ENCODE measurements at regions of chr15 and their contacts with region 1.

Region 1: DNA sequence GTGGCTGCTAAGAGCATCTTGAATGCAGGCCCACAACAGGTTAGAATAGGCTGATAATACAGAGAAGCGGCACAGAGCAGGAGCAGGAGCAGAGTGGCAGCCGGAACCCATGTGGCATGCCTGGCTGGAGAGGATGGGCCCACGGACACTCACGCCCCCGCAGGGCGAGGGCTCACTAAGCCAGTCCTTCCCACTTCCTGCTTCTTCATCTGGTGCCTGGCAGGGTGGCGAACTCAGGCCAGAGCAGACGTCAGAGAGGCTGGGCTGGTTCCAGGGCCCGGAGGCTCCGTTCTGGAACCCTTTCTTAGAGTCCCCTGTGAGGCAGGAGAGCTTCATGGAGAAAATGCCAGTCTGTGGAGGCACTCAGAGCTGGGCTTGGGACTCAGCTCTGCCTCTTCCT is 195.1 kb downstream of the NTRK3 start:
- DNase-seq: no peak
- H3K4me3 ChIP-seq: no peak overlapping the region
- H3K27ac ChIP-seq: no peak overlapping the region
- H3K4me1 ChIP-seq: peaks cover 0 to 2% (median under 1%) of the 10 kb centered on the region in 4 experiments; a peak in 2 of 7 replicates
- H3K27me3 ChIP-seq: no peaks in the 10 kb centered on the region
- CTCF ChIP-seq: no peak
- EP300 ChIP-seq: no peak
- POLR2A ChIP-seq: no peak
- RAD21 ChIP-seq: no peak

Region 2: GRCh38 chr15:88073391-88073691 is 11.9 kb after region 1 on chr15:
- CTCF ChIA-PET with region 1: interaction called, 10 read pairs
- POLR2A ChIA-PET with region 1: no interaction called
- DNase-seq: peak in 1 of 2 experiments; percentile 3
- H3K4me3 ChIP-seq: no peak overlapping the region
- H3K27ac ChIP-seq: no peak overlapping the region
- H3K4me1 ChIP-seq: peaks cover 0 to 9% (median 4%) of the 10 kb centered on the region in 4 experiments; a peak in 4 of 7 replicates
- H3K27me3 ChIP-seq: no peaks in the 10 kb centered on the region
- CTCF ChIP-seq: no peak
- EP300 ChIP-seq: no peak
- POLR2A ChIP-seq: no peak
- RAD21 ChIP-seq: no peak

Region 3: DNA sequence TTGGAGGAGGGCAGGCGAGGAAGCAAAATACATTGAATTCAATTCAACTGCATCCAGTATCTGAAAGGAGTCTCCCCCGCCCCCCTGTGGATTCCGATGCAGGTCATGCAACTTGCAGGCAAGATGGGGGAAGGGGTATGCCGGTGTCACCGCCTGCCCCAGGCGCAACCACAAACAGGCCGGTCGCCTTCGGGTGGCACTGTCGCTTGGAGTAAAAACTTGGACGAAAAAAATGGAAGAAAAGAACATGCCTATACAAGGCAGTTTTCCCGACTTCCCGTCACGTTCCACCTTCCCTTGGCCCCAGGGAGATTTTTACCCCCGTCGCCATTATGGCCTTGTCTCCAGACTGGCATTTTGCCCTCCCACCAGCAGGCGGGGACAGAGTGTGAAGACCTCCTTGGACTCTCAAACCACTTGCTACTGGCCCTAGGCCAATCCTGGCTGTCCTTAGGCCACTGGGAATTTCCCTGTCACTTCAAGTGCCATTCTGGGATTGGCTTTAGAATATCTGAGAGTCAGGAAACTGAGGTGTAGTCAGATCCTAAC is 196.7 kb after region 1 on chr15:
- CTCF ChIA-PET with region 1: no interaction called
- POLR2A ChIA-PET with region 1: no interaction called
- DNase-seq: peak; percentile 44 to 89
- H3K4me3 ChIP-seq: peak overlapping the region; percentile 70 to 91 (median 82)
- H3K27ac ChIP-seq: no peak overlapping the region
- H3K4me1 ChIP-seq: peaks cover 0 to 9% (median 3%) of the 10 kb centered on the region in 4 experiments; a peak in 6 of 7 replicates
- H3K27me3 ChIP-seq: peaks cover 21 to 39% (median 32%) of the 10 kb centered on the region in 4 experiments
- CTCF ChIP-seq: peak; percentile 70 to 92 (median 84)
- EP300 ChIP-seq: no peak
- POLR2A ChIP-seq: no peak
- RAD21 ChIP-seq: peak; percentile 47 to 64